ENCODE measurements at regions of chr12 and their contacts with region 1.

Region 1: DNA sequence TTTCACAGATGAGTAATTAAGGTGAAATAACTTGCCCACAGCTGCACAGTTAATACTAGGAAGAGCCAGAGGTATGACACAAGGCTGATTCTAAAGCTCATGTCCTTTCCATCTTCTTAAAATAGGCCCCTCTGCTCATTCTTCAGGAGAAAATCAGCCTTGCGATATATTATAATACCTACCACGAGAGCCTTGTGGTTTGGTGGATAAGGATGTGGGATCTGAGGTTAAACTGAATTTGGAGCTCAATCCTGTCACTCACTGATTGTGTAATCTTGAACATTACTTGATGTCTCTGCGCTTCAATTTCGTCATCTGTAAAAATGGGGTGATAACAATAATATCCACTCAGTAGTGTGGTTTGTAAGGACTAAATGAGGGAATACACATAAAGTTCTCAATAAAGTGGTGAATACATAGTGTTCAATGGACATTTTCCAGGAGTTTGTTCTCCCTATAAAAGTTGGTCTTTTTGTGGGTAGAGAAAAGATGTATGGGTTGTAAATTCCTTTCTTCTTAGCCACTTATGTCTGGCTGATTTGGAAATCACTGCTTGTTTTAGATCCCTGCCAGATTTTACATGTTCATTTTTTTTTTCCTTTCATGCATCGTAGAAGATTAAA is 25.1 kb upstream of the ATP2B1 start:
- DNase-seq: peak; percentile 93
- ATAC-seq: peak; percentile 74
- H3K4me3 ChIP-seq: peak overlapping the region; percentile 0; the same call in 1 of the 2 replicates
- H3K27ac ChIP-seq: peak overlapping the region; percentile 89
- H3K4me1 ChIP-seq: peaks cover 38% of the 10 kb centered on the region
- H3K27me3 ChIP-seq: no peaks in the 10 kb centered on the region
- CTCF ChIP-seq: no peak

Region 2: GRCh38 chr12:89750514-89751351 is 17.0 kb after region 1 on chr12:
- CTCF ChIA-PET with region 1: no interaction called
- POLR2A ChIA-PET with region 1: no interaction called
- intact Hi-C with region 1: loop called (anchors 2 kb)
- DNase-seq: peak; percentile 90
- ATAC-seq: peak; percentile 85
- H3K4me3 ChIP-seq: peak overlapping the region; percentile 7; the same call in 1 of the 2 replicates
- H3K27ac ChIP-seq: peak overlapping the region; percentile 82
- H3K4me1 ChIP-seq: peaks cover 22% of the 10 kb centered on the region
- H3K27me3 ChIP-seq: no peaks in the 10 kb centered on the region
- CTCF ChIP-seq: no peak

Region 3: GRCh38 chr12:89875225-89875624 is 141.5 kb after region 1 on chr12:
- CTCF ChIA-PET with region 1: no interaction called
- POLR2A ChIA-PET with region 1: no interaction called
- intact Hi-C with region 1: loop called (anchors 5 kb)
- DNase-seq: no peak
- ATAC-seq: no peak
- H3K4me3 ChIP-seq: no peak overlapping the region
- H3K27ac ChIP-seq: no peak overlapping the region
- H3K4me1 ChIP-seq: no peaks in the 10 kb centered on the region
- H3K27me3 ChIP-seq: no peaks in the 10 kb centered on the region
- CTCF ChIP-seq: no peak

Measured in PC-3 (cell line).